ENCODE measurements at regions of chr1 and their contacts with region 1.

Region 1: GRCh38 chr1:41003640-41004220 is 17.8 kb downstream of the SLFNL1 start:
- DNase-seq: peak; percentile 94
- H3K4me3 Mint-ChIP-seq: no peak overlapping the region
- H3K27ac Mint-ChIP-seq: no peak overlapping the region
- H3K4me1 Mint-ChIP-seq: peaks cover 24% of the 10 kb centered on the region
- H3K27me3 Mint-ChIP-seq: no peaks in the 10 kb centered on the region

Region 2: DNA sequence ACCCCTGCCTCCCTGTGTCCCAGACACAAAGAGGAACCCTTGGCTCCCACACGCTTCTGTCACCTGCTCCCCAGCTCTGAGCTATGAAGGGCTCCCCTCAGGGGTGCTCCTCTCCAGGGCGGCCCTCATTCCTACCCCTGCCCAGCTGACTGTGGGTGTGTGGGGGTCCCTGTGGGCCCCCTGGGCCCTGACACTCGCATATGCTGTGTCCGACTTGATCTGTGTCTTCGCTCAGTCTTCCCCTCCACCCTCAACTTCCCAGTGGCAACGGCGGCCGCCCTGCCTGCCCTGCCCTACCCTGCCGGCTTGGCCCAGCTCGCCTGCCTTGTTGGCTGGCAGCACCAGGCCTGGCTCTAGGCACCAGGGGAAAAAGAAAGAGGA is 219.0 kb before region 1 on chr1:
- CTCF ChIA-PET with region 1: no interaction called
- POLR2A ChIA-PET with region 1: no interaction called
- intact Hi-C with region 1: no loop called
- DNase-seq: no peak
- H3K4me3 Mint-ChIP-seq: no peak overlapping the region
- H3K27ac Mint-ChIP-seq: no peak overlapping the region
- H3K4me1 Mint-ChIP-seq: peaks cover 7% of the 10 kb centered on the region
- H3K27me3 Mint-ChIP-seq: peaks cover 30% of the 10 kb centered on the region

Region 3: DNA sequence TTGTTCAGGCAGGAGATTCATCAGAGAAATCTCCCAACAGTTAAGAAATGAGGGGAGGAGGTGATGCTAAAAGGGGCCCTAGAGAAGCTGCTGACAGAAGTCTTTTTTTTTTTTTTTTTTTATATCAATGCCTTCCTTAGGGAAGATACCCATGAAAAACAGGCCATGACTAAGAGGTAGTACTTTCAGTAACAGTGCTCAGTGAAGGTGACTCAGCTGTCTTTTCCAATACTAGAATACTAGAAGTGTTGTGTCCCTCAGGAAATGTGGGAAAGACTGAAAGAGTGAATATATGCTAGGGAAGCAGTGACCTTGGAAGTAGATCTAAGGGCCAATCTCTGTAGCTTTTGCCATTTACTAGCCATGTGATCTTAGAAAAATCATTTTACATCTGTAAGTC is 70.2 kb after region 1 on chr1:
- CTCF ChIA-PET with region 1: no interaction called
- POLR2A ChIA-PET with region 1: no interaction called
- intact Hi-C with region 1: no loop called
- DNase-seq: no peak
- H3K4me3 Mint-ChIP-seq: no peak overlapping the region
- H3K27ac Mint-ChIP-seq: no peak overlapping the region
- H3K4me1 Mint-ChIP-seq: no peaks in the 10 kb centered on the region
- H3K27me3 Mint-ChIP-seq: no peaks in the 10 kb centered on the region

Region 4: GRCh38 chr1:41241782-41242341 is 238.1 kb after region 1 on chr1 and contains the start of gene SCMH1:
- CTCF ChIA-PET with region 1: no interaction called
- POLR2A ChIA-PET with region 1: no interaction called
- intact Hi-C with region 1: loop called (anchors 5 kb)
- DNase-seq: peak; percentile 65
- H3K4me3 Mint-ChIP-seq: peak within 1 kb of the TSS; percentile 77
- H3K27ac Mint-ChIP-seq: peak within 1 kb of the TSS; percentile 73
- H3K4me1 Mint-ChIP-seq: peaks cover 11% of the 10 kb centered on the region
- H3K27me3 Mint-ChIP-seq: no peaks in the 10 kb centered on the region
- total RNA-seq, gene SCMH1: 17.7 to 20.7 TPM

Measured in activated CD4-positive, alpha-beta memory T cell treated with anti-CD3 and anti-CD28 coated beads for 36 hours (primary cell).